ENCODE measurements at regions of chr4 and their contacts with region 1.

Region 1: GRCh38 chr4:138035781-138036258 is 206.3 kb downstream of the SLC7A11 start:
- DNase-seq: no peak
- ATAC-seq: peak; percentile 81
- H3K4me3 ChIP-seq: no peak overlapping the region
- H3K27ac ChIP-seq: no peak overlapping the region
- H3K4me1 ChIP-seq: peaks cover 0 to 3% of the 10 kb centered on the region in 2 donors
- H3K27me3 ChIP-seq: no peaks in the 10 kb centered on the region

Region 2: DNA sequence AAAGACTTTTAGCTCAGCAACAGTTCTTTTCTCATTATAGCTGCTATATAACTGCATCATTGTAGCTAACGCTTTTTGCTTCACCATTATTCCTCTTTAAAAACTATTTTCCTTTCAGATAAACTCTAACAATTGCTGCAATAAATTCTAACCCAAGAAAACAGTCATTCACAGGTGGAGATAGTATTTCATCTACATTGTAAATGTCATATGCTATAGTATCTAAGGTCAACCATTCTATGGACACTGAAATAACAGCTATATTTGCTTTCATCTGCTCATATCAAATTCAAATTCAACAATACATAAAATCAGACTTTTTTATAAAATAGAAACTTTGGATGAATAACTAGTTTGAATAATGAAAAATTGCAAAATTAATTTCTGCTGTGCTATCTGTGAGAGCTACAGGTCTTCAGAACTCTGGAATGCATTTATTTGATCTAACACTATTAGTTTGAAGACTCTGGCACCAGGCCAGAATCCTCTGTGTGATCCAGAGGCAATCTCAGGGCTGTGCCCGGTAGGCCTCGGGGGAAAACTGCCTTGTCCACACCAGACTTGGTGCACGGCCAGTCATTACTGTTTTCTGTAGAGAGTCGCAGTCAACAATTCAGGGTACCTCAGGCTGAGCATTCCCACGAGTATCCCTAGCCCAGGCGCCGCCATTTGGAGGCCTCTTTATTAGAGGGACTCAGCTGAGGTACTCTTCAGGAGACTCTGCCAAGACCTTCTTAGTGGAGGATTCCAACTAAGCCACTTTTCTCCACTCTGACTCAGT is 126.1 kb before region 1 on chr4:
- intact Hi-C with region 1: no loop called
- DNase-seq: no peak
- ATAC-seq: no peak
- H3K4me3 ChIP-seq: no peak overlapping the region
- H3K27ac ChIP-seq: no peak overlapping the region
- H3K4me1 ChIP-seq: no peaks in the 10 kb centered on the region
- H3K27me3 ChIP-seq: no peaks in the 10 kb centered on the region

Region 3: DNA sequence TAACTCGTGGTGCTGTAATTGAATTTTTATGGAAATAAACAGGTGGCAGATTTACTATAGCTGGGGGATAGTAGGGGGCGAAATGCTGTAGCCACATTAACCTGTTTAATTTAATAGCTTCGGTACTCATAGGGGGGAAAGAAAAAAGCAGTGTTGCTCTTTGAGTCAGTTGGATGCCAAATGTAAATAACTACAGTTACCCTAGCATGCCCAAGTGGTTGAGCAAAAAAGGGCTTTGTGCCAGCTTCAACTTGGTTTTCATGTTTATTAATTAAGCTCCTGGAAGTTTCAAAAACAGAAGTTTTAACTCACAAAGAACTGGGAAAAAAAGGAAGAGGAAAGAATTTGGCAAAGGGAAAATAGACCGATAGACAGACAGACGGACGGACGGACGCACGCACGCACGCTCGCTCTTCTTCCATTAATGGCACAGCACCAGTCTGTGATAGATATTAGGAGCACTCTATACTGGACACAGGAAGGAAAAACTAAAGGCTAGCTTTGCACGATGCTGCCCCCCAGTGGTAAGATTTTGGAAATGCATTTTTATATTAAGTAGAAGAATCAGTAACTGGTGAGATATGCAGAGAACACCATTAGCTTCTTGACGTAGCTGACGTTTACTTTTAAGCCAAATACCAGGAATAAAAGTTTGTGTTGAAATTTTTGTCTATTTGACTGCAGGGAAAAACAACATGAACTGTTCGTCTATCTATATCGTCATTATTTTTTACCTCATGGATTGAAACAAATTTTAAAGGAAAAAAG is 54.5 kb after region 1 on chr4:
- intact Hi-C with region 1: loop called (anchors 1 to 2 kb)
- DNase-seq: no peak
- ATAC-seq: peak; percentile 90
- H3K4me3 ChIP-seq: peak overlapping the region in 1 of 2 donors; percentile 13
- H3K27ac ChIP-seq: no peak overlapping the region
- H3K4me1 ChIP-seq: peaks cover 0 to 9% of the 10 kb centered on the region in 2 donors
- H3K27me3 ChIP-seq: no peaks in the 10 kb centered on the region

Region 4: DNA sequence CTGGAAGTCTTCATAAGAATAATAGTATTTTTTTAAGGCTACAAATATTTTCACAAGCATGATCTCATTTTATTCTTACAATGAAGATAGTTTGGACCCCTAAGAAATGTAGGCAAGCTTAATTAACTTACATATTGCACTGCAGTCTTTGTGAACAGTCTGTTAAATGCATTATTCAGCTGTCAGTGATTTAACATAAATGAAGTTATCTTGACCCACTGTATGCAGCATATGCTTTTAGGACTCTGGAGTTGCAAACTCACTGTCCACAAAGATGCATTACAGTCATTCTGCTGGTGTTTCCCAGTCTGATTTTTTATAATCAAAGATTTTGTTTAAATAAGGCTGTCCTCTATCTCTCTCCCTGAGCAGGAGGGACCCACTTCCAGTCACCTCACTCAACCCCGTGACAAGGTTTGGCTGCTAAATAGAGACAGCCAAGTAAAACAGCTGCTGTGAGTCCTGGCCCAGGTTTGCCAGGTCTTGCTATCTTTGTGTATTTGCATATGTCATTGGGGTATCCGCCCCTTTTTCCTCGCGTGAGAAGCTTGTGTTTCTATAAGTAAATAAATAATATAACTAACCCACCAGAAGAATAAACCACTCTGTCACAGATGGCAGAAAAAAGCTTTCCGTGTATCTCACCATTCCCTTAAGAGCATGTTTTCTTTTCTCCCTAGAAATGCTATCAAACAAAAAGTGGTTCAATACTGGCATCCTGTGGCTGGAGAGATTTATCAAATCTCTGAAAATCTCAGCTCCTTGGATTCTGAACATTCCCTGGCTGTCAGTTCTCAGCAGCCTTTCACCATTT is 139.4 kb after region 1 on chr4:
- intact Hi-C with region 1: loop called (anchors 2 to 5 kb)
- DNase-seq: no peak
- ATAC-seq: no peak
- H3K4me3 ChIP-seq: no peak overlapping the region
- H3K27ac ChIP-seq: no peak overlapping the region
- H3K4me1 ChIP-seq: no peaks in the 10 kb centered on the region
- H3K27me3 ChIP-seq: no peaks in the 10 kb centered on the region

Region 5: DNA sequence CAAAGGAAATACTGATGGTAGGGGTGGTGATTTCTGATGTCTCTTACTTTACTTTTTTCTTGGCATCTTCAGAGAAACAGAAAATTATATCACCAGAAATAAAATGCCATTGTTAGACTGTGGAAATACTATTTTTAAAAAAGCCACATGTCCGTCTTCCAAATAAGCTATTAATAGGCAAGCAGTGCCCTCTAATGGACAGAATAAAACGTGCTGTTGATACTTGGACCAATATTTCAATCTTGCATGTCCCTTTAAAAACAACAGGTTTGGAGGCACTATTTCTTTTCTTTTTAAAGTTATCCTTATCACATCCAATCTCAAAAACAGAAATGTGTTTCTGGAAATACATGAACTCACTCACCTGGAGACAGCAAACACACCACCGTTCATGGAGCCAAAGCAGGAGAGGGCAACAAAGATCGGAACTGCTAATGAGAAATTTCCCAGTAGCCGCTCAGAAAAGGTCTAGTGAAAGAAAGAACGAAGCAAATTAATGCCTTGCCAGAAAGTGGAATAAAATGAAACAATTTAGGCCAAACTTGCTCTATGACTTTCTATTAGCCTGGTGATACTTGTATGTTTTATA is 147.1 kb after region 1 on chr4:
- intact Hi-C with region 1: loop called in 1 of 2 experiments (anchors 5 kb)
- DNase-seq: no peak
- ATAC-seq: no peak
- H3K4me3 ChIP-seq: no peak overlapping the region
- H3K27ac ChIP-seq: no peak overlapping the region
- H3K4me1 ChIP-seq: peaks cover 0 to 3% of the 10 kb centered on the region in 2 donors
- H3K27me3 ChIP-seq: no peaks in the 10 kb centered on the region

Region 6: GRCh38 chr4:138680989-138681604 is 645.3 kb after region 1 on chr4:
- intact Hi-C with region 1: loop called (anchors 1 to 5 kb)
- DNase-seq: peak; percentile 84 to 90
- ATAC-seq: peak; percentile 89
- H3K4me3 ChIP-seq: no peak overlapping the region
- H3K27ac ChIP-seq: no peak overlapping the region
- H3K4me1 ChIP-seq: no peaks in the 10 kb centered on the region
- H3K27me3 ChIP-seq: no peaks in the 10 kb centered on the region

Region 7: GRCh38 chr4:138870737-138871554 is 835.1 kb after region 1 on chr4:
- intact Hi-C with region 1: loop called (anchors 10 kb)
- DNase-seq: peak in 1 of 2 donors; percentile 50
- ATAC-seq: peak; percentile 75
- H3K4me3 ChIP-seq: no peak overlapping the region
- H3K27ac ChIP-seq: no peak overlapping the region
- H3K4me1 ChIP-seq: no peaks in the 10 kb centered on the region
- H3K27me3 ChIP-seq: no peaks in the 10 kb centered on the region